ENCODE measurements at regions of chr2 and their contacts with region 1.

Region 1: GRCh38 chr2:223896833-223897311 is 48.3 kb downstream of the WDFY1 start:
- DNase-seq: peak; percentile 21
- ATAC-seq: no peak
- H3K4me3 Mint-ChIP-seq: no peak overlapping the region
- H3K27ac Mint-ChIP-seq: no peak overlapping the region
- H3K4me1 Mint-ChIP-seq: peaks cover 24% of the 10 kb centered on the region
- H3K27me3 Mint-ChIP-seq: no peaks in the 10 kb centered on the region

Region 2: GRCh38 chr2:223837287-223838061 is 59.4 kb before region 1 on chr2 and contains the start of gene AP1S3:
- CTCF ChIA-PET with region 1: no interaction called
- POLR2A ChIA-PET with region 1: no interaction called
- intact Hi-C with region 1: loop called in 1 of 2 experiments (anchors 2 kb)
- DNase-seq: peak; percentile 88
- ATAC-seq: peak; percentile 98
- H3K4me3 Mint-ChIP-seq: peak within 1 kb of the TSS; percentile 86
- H3K27ac Mint-ChIP-seq: peak within 1 kb of the TSS; percentile 82
- H3K4me1 Mint-ChIP-seq: peaks cover 13% of the 10 kb centered on the region
- H3K27me3 Mint-ChIP-seq: no peaks in the 10 kb centered on the region
- total RNA-seq, gene AP1S3: 8.8 to 10.1 TPM

Region 3: GRCh38 chr2:223936862-223937326 is 40.0 kb after region 1 on chr2:
- CTCF ChIA-PET with region 1: no interaction called
- POLR2A ChIA-PET with region 1: no interaction called
- intact Hi-C with region 1: loop called (anchors 2 to 5 kb)
- DNase-seq: no peak
- ATAC-seq: peak; percentile 39
- H3K4me3 Mint-ChIP-seq: peak overlapping the region; percentile 19
- H3K27ac Mint-ChIP-seq: peak overlapping the region; percentile 78
- H3K4me1 Mint-ChIP-seq: peaks cover 75% of the 10 kb centered on the region
- H3K27me3 Mint-ChIP-seq: no peaks in the 10 kb centered on the region

Measured in activated CD4-positive, alpha-beta T cell treated with anti-CD3 and anti-CD28 coated beads for 36 hours (primary cell).